CD8-positive, alpha-beta memory T cell (primary cell): ENCODE measurements at regions of chr2 and their contacts with region 1.

Region 1: GRCh38 chr2:230202430-230203109 is 17.2 kb downstream of the SP110 start:
- DNase-seq: no peak
- H3K4me3 ChIP-seq: no peak overlapping the region
- H3K4me3 Mint-ChIP-seq: no peak overlapping the region
- H3K27ac ChIP-seq: no peak overlapping the region
- H3K27ac Mint-ChIP-seq: peak overlapping the region; percentile 12 to 89 (median 58)
- H3K4me1 ChIP-seq: no peaks in the 10 kb centered on the region
- H3K4me1 Mint-ChIP-seq: peaks cover 9 to 29% (median 24%) of the 10 kb centered on the region in 3 donors
- H3K27me3 ChIP-seq: no peaks in the 10 kb centered on the region
- H3K27me3 Mint-ChIP-seq: no peaks in the 10 kb centered on the region

Region 2: GRCh38 chr2:230184727-230185578 is 17.6 kb before region 1 on chr2:
- CTCF ChIA-PET with region 1: no interaction called
- POLR2A ChIA-PET with region 1: interaction called, 11 read pairs
- DNase-seq: no peak
- H3K4me3 ChIP-seq: no peak overlapping the region
- H3K4me3 Mint-ChIP-seq: no peak overlapping the region
- H3K27ac ChIP-seq: no peak overlapping the region
- H3K27ac Mint-ChIP-seq: peak overlapping the region in 4 of 8 donors; percentile 9 to 72 (median 20)
- H3K4me1 ChIP-seq: no peaks in the 10 kb centered on the region
- H3K4me1 Mint-ChIP-seq: peaks cover 2 to 9% (median 3%) of the 10 kb centered on the region in 3 donors
- H3K27me3 ChIP-seq: no peaks in the 10 kb centered on the region
- H3K27me3 Mint-ChIP-seq: peaks cover 0 to 1% of the 10 kb centered on the region in 2 donors